OCI-LY7 (cell line): ENCODE measurements at regions of chr9 and their contacts with region 1.

Region 1: DNA sequence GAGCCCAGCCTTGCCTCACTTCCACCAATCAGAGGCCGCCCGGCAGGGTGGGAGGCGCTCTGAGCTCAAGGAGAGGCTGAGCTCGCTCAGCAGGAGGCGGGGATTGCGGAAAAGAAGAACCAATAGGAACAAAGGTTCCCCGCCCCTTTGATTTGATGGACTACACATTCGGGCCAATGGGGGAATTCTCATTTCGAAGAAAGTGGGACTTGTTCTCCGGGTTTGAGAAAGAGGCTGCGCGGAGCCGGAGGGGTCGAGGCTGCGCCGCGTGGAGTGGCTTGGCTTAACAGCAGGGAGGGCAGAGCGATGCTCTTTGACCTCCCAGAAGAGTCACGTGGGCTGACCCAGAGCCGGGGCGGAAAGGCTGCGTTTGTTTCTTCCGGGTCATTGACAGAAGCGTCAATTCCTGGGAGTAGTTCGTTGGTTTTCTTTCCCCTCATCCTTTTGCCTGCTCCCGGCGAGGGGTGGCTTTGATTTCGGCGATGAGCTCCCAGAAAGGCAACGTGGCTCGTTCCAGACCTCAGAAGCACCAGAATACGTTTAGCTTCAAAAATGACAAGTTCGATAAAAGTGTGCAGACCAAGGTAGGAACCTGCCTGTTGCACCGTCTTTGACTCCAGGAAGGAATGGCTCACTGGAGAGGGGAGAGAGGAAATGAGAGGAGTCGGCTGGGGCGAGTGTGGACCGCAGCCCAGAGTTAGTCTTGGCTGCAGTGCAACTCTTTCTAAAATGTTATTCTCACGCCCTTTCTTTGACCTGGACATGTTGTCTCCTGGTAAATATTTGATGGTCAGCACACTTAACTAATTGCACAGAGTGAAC is at the start of gene C9orf85:
- DNase-seq: peak; percentile 100
- H3K4me3 ChIP-seq: peak within 1 kb of the TSS; percentile 93
- H3K27ac ChIP-seq: peak within 1 kb of the TSS; percentile 83
- H3K4me1 ChIP-seq: peaks cover 32% of the 10 kb centered on the region
- CTCF ChIP-seq: no peak
- total RNA-seq, gene C9orf85: 5.6 and 8.7 TPM in 2 replicates

Region 2: GRCh38 chr9:71863631-71864030 is 47.8 kb before region 1 on chr9:
- CTCF ChIA-PET with region 1: no interaction called
- POLR2A ChIA-PET with region 1: interaction called, 3 read pairs
- intact Hi-C with region 1: loop called (anchors 2 kb)
- DNase-seq: no peak
- H3K4me3 ChIP-seq: no peak overlapping the region
- H3K27ac ChIP-seq: no peak overlapping the region
- H3K4me1 ChIP-seq: peaks cover 9% of the 10 kb centered on the region
- CTCF ChIP-seq: no peak

Region 3: DNA sequence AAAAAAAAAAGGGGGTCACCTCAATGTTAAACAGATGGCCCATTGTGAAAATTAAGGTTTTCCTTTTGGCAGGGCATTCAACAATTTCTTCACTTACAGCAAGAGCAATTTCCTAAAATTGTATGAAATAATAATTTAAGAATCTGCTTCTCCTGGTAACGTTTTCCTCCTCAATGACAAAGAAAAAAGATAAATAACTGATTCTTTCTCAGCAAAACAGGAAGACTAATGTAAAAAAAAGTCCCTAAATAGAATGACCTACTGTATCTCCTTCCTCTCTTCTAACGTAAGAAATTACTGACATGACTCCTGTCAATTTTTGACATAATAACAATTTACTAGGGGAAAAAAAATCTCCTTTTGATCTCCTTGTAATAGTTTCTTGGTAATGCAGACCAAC is 26.0 kb before region 1 on chr9:
- CTCF ChIA-PET with region 1: no interaction called
- POLR2A ChIA-PET with region 1: interaction called, 29 read pairs
- intact Hi-C with region 1: loop called (anchors 1 kb)
- DNase-seq: peak; percentile 48
- H3K4me3 ChIP-seq: peak overlapping the region; percentile 40
- H3K27ac ChIP-seq: peak overlapping the region; percentile 94
- H3K4me1 ChIP-seq: peaks cover 60% of the 10 kb centered on the region
- CTCF ChIP-seq: no peak

Region 4: GRCh38 chr9:71891557-71892189 is 19.8 kb before region 1 on chr9:
- CTCF ChIA-PET with region 1: interaction called, 4 read pairs
- POLR2A ChIA-PET with region 1: interaction called, 65 read pairs
- intact Hi-C with region 1: no loop called
- DNase-seq: peak; percentile 41
- H3K4me3 ChIP-seq: peak overlapping the region; percentile 46
- H3K27ac ChIP-seq: peak overlapping the region; percentile 57
- H3K4me1 ChIP-seq: peaks cover 96% of the 10 kb centered on the region
- CTCF ChIP-seq: no peak

Region 5: DNA sequence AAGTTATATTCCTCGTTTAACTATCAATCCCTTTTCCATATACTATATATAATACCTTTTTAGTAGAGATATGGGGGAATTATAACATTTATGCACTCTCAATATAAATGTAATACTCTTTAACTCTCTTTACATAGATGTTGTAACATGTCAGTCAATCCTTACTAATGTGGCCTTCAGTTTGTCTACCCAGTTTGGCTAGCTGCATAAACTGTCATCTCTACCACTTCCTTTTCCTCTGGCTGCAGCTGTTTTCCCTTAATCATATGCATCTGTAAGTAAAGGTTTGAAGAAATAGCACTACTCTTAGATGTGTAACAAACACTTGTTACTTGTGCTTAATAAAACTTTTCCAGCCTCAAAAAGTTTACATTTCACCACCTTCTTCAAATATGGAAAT is 13.9 kb before region 1 on chr9:
- CTCF ChIA-PET with region 1: interaction called, 4 read pairs
- POLR2A ChIA-PET with region 1: interaction called, 65 read pairs
- intact Hi-C with region 1: loop called (anchors 1 kb)
- DNase-seq: peak; percentile 81
- H3K4me3 ChIP-seq: peak overlapping the region; percentile 53
- H3K27ac ChIP-seq: peak overlapping the region; percentile 99
- H3K4me1 ChIP-seq: peaks cover 90% of the 10 kb centered on the region
- CTCF ChIP-seq: no peak

Region 6: DNA sequence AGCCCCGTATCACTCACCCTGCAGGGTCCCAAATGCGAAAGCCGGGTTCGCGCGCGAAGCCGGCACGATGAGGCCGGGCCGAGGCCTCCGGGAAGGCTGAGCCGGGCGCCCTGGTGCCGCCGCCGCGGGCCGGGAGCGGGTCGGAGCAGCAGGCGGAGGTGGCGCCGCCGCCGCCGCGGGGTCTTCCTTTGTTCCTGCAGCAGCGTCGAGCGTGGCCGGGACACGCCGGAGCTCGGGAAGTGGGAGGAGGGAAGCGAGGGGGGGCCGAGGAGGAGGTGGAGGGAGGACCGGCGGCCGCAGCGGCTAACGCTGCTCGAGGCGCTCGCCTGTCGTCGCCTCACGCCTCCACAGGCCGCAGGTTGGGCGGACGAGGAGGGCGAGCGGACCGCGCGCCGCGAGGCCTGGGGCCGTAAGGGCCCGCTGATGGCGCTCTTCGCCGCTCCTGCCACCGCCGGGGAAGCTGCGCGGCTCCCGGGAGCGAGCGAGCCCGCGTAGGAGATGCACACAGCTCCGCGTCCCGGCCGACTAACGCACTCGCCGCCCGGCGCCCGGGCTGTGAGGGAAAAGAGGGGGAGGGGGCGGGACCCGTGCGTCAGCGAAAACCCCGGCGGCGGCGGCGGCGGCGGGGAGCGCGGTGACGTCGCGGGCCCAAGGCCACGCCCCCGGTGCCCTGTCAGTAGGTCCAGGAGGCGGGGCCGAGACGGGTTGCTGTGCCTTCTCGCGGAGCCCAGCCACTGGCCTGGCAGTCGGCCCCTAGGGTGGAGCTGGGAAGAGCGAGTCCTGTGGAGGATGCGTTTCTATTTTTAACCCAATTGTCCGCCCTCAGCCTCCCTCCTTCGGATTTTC is 453.4 kb after region 1 on chr9 and contains the start of gene ZFAND5:
- CTCF ChIA-PET with region 1: no interaction called
- POLR2A ChIA-PET with region 1: interaction called, 3 read pairs
- intact Hi-C with region 1: loop called (anchors 10 kb)
- DNase-seq: peak; percentile 94
- H3K4me3 ChIP-seq: peak within 1 kb of the TSS; percentile 90
- H3K27ac ChIP-seq: peak within 1 kb of the TSS; percentile 67
- H3K4me1 ChIP-seq: peaks cover 25% of the 10 kb centered on the region
- CTCF ChIP-seq: no peak
- total RNA-seq, gene ZFAND5: 30.9 and 60.5 TPM in 2 replicates